WTC11 (cell line): ENCODE measurements at regions of chr9 and their contacts with region 1.

Region 1: GRCh38 chr9:100426530-100427428 is at the start of gene MSANTD3:
- DNase-seq: peak; percentile 66
- ATAC-seq: peak; percentile 75
- H3K4me3 Mint-ChIP-seq: peak within 1 kb of the TSS; percentile 92
- H3K27ac Mint-ChIP-seq: peak within 1 kb of the TSS; percentile 87
- H3K4me1 Mint-ChIP-seq: peaks cover 28% of the 10 kb centered on the region
- H3K27me3 Mint-ChIP-seq: no peaks in the 10 kb centered on the region
- CTCF ChIP-seq: no peak
- total RNA-seq, gene MSANTD3: 28.9 to 30.3 TPM (median 30.2 TPM) in 3 replicates

Region 2: GRCh38 chr9:100411472-100412283 is 15.1 kb before region 1 on chr9:
- CTCF ChIA-PET with region 1: interaction called, 3 read pairs
- POLR2A ChIA-PET with region 1: interaction called, 10 read pairs
- DNase-seq: peak; percentile 90
- ATAC-seq: peak; percentile 100
- H3K4me3 Mint-ChIP-seq: peak overlapping the region; percentile 78
- H3K27ac Mint-ChIP-seq: peak overlapping the region; percentile 55
- H3K4me1 Mint-ChIP-seq: peaks cover 13% of the 10 kb centered on the region
- H3K27me3 Mint-ChIP-seq: peaks cover 13% of the 10 kb centered on the region
- CTCF ChIP-seq: no peak

Region 3: DNA sequence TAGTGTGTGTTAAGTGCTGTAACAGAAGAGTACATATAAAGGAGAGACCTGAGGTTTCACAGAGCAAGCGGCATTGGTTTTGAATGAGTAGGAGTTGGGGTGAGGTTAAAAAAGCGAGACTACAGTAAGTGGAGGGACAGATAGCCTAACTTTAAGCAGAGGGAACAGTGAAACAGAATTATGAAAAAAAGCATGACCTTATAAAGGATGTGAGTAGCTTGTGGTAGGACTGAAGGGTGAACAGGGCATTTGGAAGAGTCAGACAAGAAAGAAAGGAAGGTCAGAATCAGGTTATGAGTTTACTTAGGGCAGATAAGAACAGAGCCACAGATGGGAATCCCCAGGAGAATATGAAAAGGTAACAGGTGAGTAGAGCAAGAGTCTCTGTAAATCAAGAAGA is 22.6 kb after region 1 on chr9:
- CTCF ChIA-PET with region 1: no interaction called
- POLR2A ChIA-PET with region 1: no interaction called
- DNase-seq: no peak
- ATAC-seq: no peak
- H3K4me3 Mint-ChIP-seq: no peak overlapping the region
- H3K27ac Mint-ChIP-seq: no peak overlapping the region
- H3K4me1 Mint-ChIP-seq: peaks cover 20% of the 10 kb centered on the region
- H3K27me3 Mint-ChIP-seq: no peaks in the 10 kb centered on the region
- CTCF ChIP-seq: no peak

Region 4: DNA sequence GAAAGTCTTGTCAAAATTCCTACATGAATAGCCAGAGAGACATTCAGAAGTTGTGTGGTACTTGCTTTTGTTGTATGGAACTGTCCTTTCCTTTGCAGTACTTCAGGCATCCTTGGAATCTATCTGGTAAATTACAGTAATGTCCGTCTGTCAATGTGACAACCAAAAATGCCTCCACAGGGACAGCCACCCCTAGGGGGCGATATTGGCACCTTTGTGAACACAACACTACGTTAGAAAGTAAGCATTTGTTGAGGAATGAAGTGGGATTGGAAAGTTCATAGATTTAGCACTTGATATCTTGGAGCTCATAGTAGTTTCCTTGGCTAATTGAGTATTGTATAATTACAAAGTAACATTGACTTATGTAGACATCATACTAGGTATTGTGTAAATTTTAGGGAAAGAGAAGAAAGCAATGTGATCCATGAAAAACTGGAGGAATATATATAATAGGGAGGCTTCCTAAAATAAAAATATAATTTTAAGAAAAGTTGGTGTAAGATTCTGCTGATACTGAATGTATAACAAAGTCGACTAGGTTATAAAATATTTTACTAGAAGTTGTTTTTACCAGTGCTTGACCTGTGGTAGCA is 78.9 kb after region 1 on chr9:
- CTCF ChIA-PET with region 1: no interaction called
- POLR2A ChIA-PET with region 1: no interaction called
- DNase-seq: peak; percentile 93
- ATAC-seq: peak; percentile 84
- H3K4me3 Mint-ChIP-seq: no peak overlapping the region
- H3K27ac Mint-ChIP-seq: peak overlapping the region; percentile 52; the same call in 1 of the 2 replicates
- H3K4me1 Mint-ChIP-seq: no peaks in the 10 kb centered on the region
- H3K27me3 Mint-ChIP-seq: no peaks in the 10 kb centered on the region
- CTCF ChIP-seq: peak; percentile 66